ENCODE measurements at regions of chr1 and their contacts with region 1.

Region 1: GRCh38 chr1:212595787-212596714 is 12.5 kb upstream of the ATF3 start:
- DNase-seq: peak; percentile 64
- ATAC-seq: peak; percentile 91
- H3K4me3 Mint-ChIP-seq: peak overlapping the region; percentile 58
- H3K27ac Mint-ChIP-seq: peak overlapping the region; percentile 89
- H3K4me1 Mint-ChIP-seq: peaks cover 39% of the 10 kb centered on the region
- H3K27me3 Mint-ChIP-seq: peaks cover 12% of the 10 kb centered on the region

Region 2: DNA sequence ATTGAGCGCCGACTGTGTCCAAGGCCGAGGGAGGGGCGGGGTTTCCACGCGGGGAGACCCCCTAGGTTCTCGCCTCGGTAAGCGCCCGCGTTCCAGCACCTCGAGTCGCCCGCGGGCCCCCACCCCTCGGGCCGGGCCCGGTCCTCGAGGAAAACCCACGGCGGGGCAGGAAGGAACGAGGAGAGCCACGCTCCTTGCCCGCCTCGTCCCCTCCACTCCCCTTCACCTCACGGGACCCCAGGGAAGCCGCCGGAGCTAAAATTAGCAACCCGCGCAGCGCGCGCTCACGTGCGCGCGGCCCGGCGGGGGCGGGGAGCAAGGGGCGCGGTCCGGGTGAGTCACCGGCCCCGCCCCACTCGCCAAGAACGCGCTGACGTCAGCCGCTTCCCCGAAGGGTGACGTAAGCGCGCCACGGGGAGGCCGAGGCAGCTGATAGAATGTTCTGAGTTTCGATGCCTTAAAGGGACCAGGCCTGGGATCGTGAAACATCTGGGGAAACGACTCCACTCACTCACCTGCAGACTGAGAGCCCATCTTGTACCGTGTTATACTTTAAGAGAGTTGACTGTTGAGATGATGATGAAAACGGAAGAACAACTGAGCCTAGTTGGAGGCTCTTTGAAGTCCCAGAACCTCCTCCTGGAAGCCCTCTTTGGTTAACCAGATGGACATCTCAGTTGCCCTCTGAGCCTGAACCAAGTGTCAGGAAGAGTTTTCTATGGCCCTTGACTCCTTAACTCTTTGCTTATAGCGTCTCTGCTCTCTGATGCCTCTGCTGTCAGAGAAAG is 37.2 kb before region 1 on chr1:
- CTCF ChIA-PET with region 1: interaction called, 3 read pairs
- POLR2A ChIA-PET with region 1: no interaction called
- intact Hi-C with region 1: loop called (anchors 1 kb)
- DNase-seq: peak; percentile 95
- ATAC-seq: peak; percentile 90
- H3K4me3 Mint-ChIP-seq: peak overlapping the region; percentile 61
- H3K27ac Mint-ChIP-seq: peak overlapping the region; percentile 95
- H3K4me1 Mint-ChIP-seq: peaks cover 19% of the 10 kb centered on the region
- H3K27me3 Mint-ChIP-seq: peaks cover 14% of the 10 kb centered on the region

Region 3: GRCh38 chr1:213041443-213041842 is 445.4 kb after region 1 on chr1:
- CTCF ChIA-PET with region 1: no interaction called
- POLR2A ChIA-PET with region 1: no interaction called
- intact Hi-C with region 1: no loop called
- DNase-seq: no peak
- ATAC-seq: no peak
- H3K4me3 Mint-ChIP-seq: no peak overlapping the region
- H3K27ac Mint-ChIP-seq: no peak overlapping the region
- H3K4me1 Mint-ChIP-seq: peaks cover 4% of the 10 kb centered on the region
- H3K27me3 Mint-ChIP-seq: peaks cover 6% of the 10 kb centered on the region

Measured in activated CD4-positive, alpha-beta T cell treated with anti-CD3 and anti-CD28 coated beads for 36 hours (primary cell).